Vagina (tissue), 2 donors: ENCODE measurements at regions of chr12 and their contacts with region 1.

Region 1: GRCh38 chr12:116015525-116015924 is 262.0 kb downstream of the MED13L start:
- DNase-seq: no peak
- H3K4me3 ChIP-seq: no peak overlapping the region
- H3K27ac ChIP-seq: no peak overlapping the region
- H3K4me1 ChIP-seq: no peaks in the 10 kb centered on the region
- H3K27me3 ChIP-seq: no peaks in the 10 kb centered on the region
- CTCF ChIP-seq: peak; percentile 10 to 34 (median 33)
- POLR2A ChIP-seq: no peak

Region 2: GRCh38 chr12:116222358-116222757 is 206.8 kb after region 1 on chr12:
- intact Hi-C with region 1: loop called (anchors 10 kb)
- DNase-seq: no peak
- H3K4me3 ChIP-seq: no peak overlapping the region
- H3K27ac ChIP-seq: no peak overlapping the region
- H3K4me1 ChIP-seq: peaks cover 40% of the 10 kb centered on the region
- H3K27me3 ChIP-seq: no peaks in the 10 kb centered on the region
- CTCF ChIP-seq: no peak
- POLR2A ChIP-seq: no peak